Dorsolateral prefrontal cortex (tissue), 120 donors: ENCODE measurements at regions of chr5 and their contacts with region 1.

Region 1: DNA sequence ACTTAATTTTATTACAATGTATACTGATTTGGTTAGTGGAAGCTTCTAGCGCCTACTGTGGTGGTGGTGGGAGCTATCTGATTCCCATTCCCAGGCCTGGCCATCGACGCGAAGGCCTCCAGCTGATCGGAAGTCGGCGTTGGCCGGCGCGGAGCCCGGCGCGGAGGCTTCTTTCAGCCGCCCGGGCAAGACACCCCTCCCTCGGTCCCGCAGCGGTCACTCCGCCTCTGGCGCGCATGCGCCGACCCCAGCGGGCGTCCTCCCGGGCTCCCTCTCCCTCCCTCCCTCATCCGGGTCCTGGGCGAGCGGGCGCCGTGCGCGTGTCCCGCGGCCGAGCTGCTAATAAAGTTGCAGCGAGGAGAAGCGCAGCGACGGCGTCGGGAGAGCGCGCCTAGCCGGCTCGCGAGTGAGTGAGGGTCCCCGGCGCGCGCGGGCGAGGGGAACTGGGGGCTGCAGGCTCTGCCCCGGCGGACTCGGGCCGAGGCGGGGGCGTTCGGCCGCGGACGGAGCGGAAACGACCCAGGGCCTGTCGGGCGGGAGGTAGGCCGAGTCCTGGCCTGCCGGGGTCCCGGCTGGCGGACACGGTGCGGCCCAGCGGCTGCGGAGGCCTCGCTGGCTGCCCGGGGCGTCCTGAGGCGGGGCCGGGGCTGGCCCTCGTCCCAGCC is at the start of gene SMAD5:
- DNase-seq: peak; percentile 89 to 98 (median 95)
- H3K4me3 ChIP-seq: peak within 1 kb of the TSS; percentile 64 to 100 (median 89)
- H3K27ac ChIP-seq: peak within 1 kb of the TSS; percentile 63 to 98 (median 94)
- H3K27me3 ChIP-seq: no peaks in the 10 kb centered on the region
- CTCF ChIP-seq: peak in 35 of 56 donors; percentile 9 to 56 (median 28)
- total RNA-seq, gene SMAD5: 45.2 to 109 (median 65.1) TPM

Region 2: DNA sequence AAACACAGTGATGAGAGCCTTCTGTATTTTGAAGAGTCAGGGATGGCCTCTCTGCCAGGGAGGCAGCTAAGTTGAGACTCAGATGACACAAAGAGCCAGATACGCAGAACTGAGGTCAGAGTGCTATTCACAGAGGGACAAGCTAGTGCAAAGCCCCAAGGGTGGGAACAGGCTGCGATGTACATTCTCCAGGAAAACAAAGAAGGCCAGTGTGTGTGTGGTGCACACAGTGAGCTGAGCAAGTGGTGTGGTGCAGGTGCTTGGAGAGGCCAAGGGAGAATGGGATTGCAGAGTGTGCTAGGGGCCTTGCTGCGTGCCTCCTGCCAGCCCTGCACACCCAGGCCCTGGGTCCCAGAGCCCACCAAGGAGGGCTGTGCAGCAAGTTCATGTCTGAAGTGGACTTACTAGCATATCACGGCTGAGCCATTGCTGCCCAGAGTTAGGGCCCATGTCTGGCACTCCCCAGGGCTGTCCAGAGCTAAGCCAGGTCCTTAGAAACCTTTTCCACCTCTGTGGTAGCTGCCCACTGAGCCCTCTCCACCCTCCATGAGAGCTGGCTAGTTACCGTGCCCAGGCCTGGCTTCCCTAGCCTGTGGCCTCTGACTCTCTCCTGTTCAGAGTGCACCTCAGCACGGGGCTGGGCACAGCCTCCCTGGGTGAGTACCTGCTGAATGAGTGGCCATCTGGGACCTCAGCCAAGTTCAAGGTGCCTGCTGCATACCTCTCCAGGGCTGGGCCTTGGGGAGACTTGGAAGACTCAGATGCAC is 288.9 kb before region 1 on chr5:
- intact Hi-C with region 1: loop called in 1 of 2 experiments (anchors 5 kb)
- DNase-seq: peak in 8 of 10 donors; percentile 35 to 90 (median 78)
- H3K4me3 ChIP-seq: no peak overlapping the region
- H3K27ac ChIP-seq: peak overlapping the region; percentile 5 to 99 (median 91)
- H3K27me3 ChIP-seq: peaks cover 0 to 4% (median 0%) of the 10 kb centered on the region in 45 donors
- CTCF ChIP-seq: peak in 2 of 56 donors; percentile 16 to 23

Region 3: DNA sequence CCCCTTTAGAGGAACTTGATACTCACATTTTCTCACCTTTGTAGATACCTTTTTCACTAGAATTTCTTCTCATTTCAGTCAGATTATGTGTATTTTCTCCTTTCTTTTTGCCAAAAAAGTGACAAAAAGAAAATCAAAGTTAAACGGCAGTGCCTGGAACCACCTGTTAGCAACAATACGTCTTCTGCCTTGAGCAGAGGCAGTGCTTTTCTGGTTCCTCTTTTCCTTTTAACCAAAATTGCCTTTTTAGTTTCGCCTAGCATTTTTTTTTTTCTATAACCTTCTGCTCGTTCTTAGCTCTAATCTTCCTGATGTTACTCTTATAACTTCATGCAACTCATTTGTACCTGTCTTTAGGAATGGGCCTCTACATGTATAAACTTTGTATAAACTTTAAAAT is 34.2 kb after region 1 on chr5:
- intact Hi-C with region 1: loop called in 1 of 2 experiments (anchors 5 kb)
- DNase-seq: no peak
- H3K4me3 ChIP-seq: no peak overlapping the region
- H3K27ac ChIP-seq: no peak overlapping the region
- H3K27me3 ChIP-seq: no peaks in the 10 kb centered on the region
- CTCF ChIP-seq: no peak

Region 4: GRCh38 chr5:136308212-136308795 is 175.6 kb after region 1 on chr5:
- intact Hi-C with region 1: no loop called
- DNase-seq: no peak
- H3K4me3 ChIP-seq: no peak overlapping the region
- H3K27ac ChIP-seq: no peak overlapping the region
- H3K27me3 ChIP-seq: peaks cover 0 to 9% (median 0%) of the 10 kb centered on the region in 45 donors
- CTCF ChIP-seq: peak in 1 of 56 donors; percentile 11

Region 5: DNA sequence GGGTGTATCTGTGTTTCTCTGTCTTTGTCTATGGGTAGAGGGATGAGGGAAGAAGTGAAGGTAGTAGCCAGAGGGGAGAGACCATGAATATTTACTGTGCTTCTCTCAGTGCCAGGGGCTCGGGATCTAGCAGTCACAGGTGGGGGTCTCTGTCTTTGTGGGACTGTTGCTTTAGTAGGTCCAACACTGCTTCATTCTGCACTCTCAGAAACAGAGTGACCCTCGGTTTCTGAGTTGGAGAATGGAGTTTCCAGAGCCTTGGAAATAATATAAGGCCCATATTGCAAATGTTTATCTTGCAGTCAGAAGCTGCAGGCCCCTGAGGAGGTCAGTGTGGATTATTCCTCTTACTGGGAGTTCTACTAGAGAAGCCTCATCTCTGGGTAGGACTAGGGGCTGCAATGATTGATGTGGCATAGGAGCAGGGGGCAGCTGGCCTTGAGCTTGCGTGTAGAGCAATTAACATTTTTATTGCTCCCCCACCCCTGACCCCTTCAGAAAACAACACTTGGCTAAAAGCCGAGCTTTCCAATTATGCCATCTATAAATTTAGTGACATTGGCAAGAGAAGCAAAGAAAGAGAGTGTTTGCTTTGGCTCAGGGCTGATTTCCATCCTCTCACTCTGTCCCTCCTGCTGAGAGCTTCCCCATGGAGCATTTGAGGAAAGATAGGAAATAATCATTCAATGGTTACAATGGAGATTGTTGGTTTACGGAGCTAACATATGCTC is 287.6 kb after region 1 on chr5:
- intact Hi-C with region 1: no loop called
- DNase-seq: no peak
- H3K4me3 ChIP-seq: no peak overlapping the region
- H3K27ac ChIP-seq: no peak overlapping the region
- H3K27me3 ChIP-seq: peaks cover 0 to 7% (median 0%) of the 10 kb centered on the region in 45 donors
- CTCF ChIP-seq: no peak